Breast epithelium (tissue), 4 donors: ENCODE measurements at regions of chr18 and their contacts with region 1.

Region 1: DNA sequence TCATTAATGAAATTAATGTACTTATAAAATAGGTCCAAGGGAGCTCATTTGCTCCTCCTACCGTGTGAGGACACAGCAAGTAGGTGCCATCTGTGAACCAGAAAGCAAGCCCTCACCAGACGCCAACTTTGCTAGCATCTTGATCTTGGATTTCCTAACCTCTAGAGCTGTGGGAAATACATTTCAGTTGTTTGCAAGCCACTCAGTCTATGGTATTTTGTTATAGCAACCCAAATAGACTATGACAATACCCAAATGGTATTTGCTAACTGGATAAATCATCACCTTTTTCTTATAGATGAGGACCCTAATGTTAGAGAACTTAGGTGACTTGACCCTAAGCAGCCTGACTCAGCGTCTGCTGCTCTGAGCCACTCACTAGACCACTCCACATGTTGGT is 379.6 kb downstream of the HRH4 start:
- DNase-seq: no peak
- H3K4me3 ChIP-seq: no peak overlapping the region
- H3K27ac ChIP-seq: no peak overlapping the region
- H3K4me1 ChIP-seq: no peaks in the 10 kb centered on the region
- H3K27me3 ChIP-seq: no peaks in the 10 kb centered on the region
- CTCF ChIP-seq: no peak
- POLR2A ChIP-seq: no peak

Region 2: GRCh38 chr18:24271381-24272331 is 568.4 kb before region 1 on chr18:
- intact Hi-C with region 1: no loop called
- DNase-seq: peak; percentile 55 to 69
- H3K4me3 ChIP-seq: peak overlapping the region; percentile 60 to 98 (median 84)
- H3K27ac ChIP-seq: peak overlapping the region; percentile 88 to 94
- H3K4me1 ChIP-seq: peaks cover 0 to 15% of the 10 kb centered on the region in 2 donors
- H3K27me3 ChIP-seq: no peaks in the 10 kb centered on the region
- CTCF ChIP-seq: peak in 2 of 3 donors; percentile 29 to 32
- POLR2A ChIP-seq: no peak

Region 3: GRCh38 chr18:24827501-24827900 is 12.6 kb before region 1 on chr18:
- intact Hi-C with region 1: loop called (anchors 1 kb)
- DNase-seq: no peak
- H3K4me3 ChIP-seq: no peak overlapping the region
- H3K27ac ChIP-seq: no peak overlapping the region
- H3K4me1 ChIP-seq: no peaks in the 10 kb centered on the region
- H3K27me3 ChIP-seq: no peaks in the 10 kb centered on the region
- CTCF ChIP-seq: no peak
- POLR2A ChIP-seq: no peak

Region 4: DNA sequence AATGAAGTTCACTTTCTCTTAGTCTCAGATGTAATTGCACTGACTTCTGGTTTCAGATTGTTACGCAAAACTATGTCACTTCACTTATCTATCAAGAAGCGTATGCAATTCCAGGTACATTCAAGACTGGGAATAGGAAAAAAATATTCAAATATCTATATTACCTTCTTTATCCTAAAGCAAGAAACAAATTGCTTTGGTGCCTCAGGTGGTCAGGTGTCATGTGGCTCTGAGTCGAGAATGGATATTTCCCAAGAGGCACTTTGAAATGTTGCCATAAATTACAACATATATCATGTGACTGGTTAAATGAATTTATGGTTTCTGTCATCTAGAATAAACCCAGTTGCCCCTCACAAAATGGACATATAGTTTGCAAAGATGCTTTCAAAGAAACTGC is 931.8 kb after region 1 on chr18:
- intact Hi-C with region 1: no loop called
- DNase-seq: no peak
- H3K4me3 ChIP-seq: no peak overlapping the region
- H3K27ac ChIP-seq: no peak overlapping the region
- H3K4me1 ChIP-seq: no peaks in the 10 kb centered on the region
- H3K27me3 ChIP-seq: no peaks in the 10 kb centered on the region
- CTCF ChIP-seq: no peak
- POLR2A ChIP-seq: no peak

Region 5: GRCh38 chr18:25935356-25935755 is 1095.3 kb after region 1 on chr18:
- intact Hi-C with region 1: loop called (anchors 5 kb)
- DNase-seq: no peak
- H3K4me3 ChIP-seq: no peak overlapping the region
- H3K27ac ChIP-seq: no peak overlapping the region
- H3K4me1 ChIP-seq: no peaks in the 10 kb centered on the region
- H3K27me3 ChIP-seq: no peaks in the 10 kb centered on the region
- CTCF ChIP-seq: no peak
- POLR2A ChIP-seq: no peak